Activated naive CD4-positive, alpha-beta T cell treated with anti-CD3 and anti-CD28 coated beads for 36 hours (primary cell): ENCODE measurements at regions of chr15 and their contacts with region 1.

Region 1: DNA sequence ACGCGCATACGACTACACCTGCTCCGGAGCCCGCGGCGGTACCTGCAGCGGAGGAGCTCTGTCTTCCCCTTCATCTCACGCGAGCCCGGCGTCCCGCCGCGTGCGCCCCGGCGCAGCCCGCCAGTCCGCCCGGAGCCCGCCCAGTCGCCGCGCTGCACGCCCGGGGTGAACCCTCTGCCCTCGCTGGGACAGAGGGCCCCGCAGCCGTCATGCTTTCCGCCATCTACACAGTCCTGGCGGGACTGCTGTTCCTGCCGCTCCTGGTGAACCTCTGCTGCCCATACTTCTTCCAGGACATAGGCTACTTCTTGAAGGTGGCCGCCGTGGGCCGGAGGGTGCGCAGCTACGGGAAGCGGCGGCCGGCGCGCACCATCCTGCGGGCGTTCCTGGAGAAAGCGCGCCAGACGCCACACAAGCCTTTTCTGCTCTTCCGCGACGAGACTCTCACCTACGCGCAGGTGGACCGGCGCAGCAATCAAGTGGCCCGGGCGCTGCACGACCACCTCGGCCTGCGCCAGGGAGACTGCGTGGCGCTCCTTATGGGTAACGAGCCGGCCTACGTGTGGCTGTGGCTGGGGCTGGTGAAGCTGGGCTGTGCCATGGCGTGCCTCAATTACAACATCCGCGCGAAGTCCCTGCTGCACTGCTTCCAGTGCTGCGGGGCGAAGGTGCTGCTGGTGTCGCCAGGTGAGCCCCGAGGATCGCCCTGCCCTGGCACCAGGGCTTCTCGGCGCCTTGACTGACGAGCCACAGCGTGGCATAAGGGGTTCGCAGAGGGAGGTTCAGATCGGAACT is 420 bp downstream of the SLC27A2 start:
- DNase-seq: peak; percentile 73
- H3K4me3 Mint-ChIP-seq: peak overlapping the region; percentile 98
- H3K27ac Mint-ChIP-seq: peak overlapping the region; percentile 87
- H3K4me1 Mint-ChIP-seq: peaks cover 29% of the 10 kb centered on the region
- H3K27me3 Mint-ChIP-seq: peaks cover 25% of the 10 kb centered on the region

Region 2: GRCh38 chr15:49901996-49902684 is 280.3 kb before region 1 on chr15:
- CTCF ChIA-PET with region 1: no interaction called
- intact Hi-C with region 1: no loop called
- DNase-seq: no peak
- H3K4me3 Mint-ChIP-seq: no peak overlapping the region
- H3K27ac Mint-ChIP-seq: no peak overlapping the region
- H3K4me1 Mint-ChIP-seq: no peaks in the 10 kb centered on the region
- H3K27me3 Mint-ChIP-seq: peaks cover 9% of the 10 kb centered on the region

Region 3: DNA sequence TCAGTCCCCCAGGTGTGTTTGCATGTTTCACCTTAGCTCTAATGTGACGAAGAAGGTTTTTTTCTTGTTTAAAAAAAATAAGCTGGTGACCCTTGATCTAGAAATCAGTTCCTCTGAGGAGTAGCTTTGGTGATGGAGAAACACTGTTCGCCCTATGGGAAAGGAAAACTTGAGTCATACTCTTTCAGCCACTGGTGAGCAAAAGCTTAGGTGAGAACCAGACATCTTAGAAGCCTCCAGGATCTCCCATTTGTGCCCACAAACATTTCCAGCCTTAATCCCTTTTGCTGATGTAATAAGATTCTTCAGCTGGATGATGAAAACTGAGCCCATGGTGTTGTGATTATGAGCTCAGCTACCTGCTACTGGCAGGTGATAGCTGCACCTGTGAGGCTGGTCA is 37.4 kb after region 1 on chr15:
- CTCF ChIA-PET with region 1: interaction called, 3 read pairs
- intact Hi-C with region 1: loop called (anchors 2 kb)
- DNase-seq: no peak
- H3K4me3 Mint-ChIP-seq: no peak overlapping the region
- H3K27ac Mint-ChIP-seq: no peak overlapping the region
- H3K4me1 Mint-ChIP-seq: peaks cover 15% of the 10 kb centered on the region
- H3K27me3 Mint-ChIP-seq: peaks cover 5% of the 10 kb centered on the region

Region 4: GRCh38 chr15:50315814-50316630 is 133.6 kb after region 1 on chr15:
- CTCF ChIA-PET with region 1: interaction called, 40 read pairs
- intact Hi-C with region 1: loop called (anchors 1 kb)
- DNase-seq: no peak
- H3K4me3 Mint-ChIP-seq: no peak overlapping the region
- H3K27ac Mint-ChIP-seq: no peak overlapping the region
- H3K4me1 Mint-ChIP-seq: peaks cover 25% of the 10 kb centered on the region
- H3K27me3 Mint-ChIP-seq: no peaks in the 10 kb centered on the region

Region 5: DNA sequence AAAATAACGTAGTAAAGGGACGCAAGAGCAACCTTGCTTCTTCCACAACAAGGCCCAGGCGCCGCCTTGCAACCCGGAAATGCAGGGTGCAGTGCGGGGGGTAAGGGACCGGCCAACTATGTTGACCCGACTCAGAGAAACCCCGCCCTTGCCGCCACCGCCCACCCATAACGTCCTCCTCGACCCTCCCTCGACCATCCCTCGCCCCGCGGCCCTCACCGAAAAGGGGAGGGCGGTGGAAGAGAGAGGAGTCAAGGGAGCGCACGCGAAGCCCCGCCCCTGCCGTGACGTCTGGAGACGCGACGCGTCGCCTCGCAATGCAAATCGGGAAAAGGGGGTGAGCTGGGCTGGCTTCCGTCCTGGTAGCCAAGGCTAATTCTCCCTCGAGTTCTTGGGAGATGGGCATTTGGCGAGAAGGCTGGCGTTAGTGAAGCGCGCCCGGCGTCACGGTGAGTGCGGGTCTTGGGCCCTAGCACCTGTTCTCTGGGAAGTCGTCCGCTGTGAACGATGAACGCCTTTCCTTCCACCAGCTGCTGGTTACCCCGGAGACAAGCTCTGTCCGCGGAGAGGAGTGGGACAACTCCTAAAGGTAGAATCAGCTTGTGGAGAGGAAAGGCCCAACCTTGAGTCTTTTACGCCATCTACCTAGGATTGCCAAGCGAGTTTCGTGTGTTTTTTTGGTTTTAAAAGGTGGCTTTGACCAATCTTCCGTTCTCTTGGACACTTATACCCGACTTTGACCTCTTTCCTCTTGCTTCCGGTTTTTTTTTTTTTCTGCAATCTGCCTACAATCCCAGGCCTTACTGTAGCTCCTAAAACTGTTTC is 241.9 kb after region 1 on chr15 and contains the start of gene USP8:
- CTCF ChIA-PET with region 1: no interaction called
- intact Hi-C with region 1: loop called (anchors 1 kb)
- DNase-seq: peak; percentile 96
- H3K4me3 Mint-ChIP-seq: peak within 1 kb of the TSS; percentile 94
- H3K27ac Mint-ChIP-seq: peak within 1 kb of the TSS; percentile 92
- H3K4me1 Mint-ChIP-seq: peaks cover 30% of the 10 kb centered on the region
- H3K27me3 Mint-ChIP-seq: no peaks in the 10 kb centered on the region
- total RNA-seq, gene USP8: 31.6 TPM